Posterior vena cava (tissue), 2 donors: ENCODE measurements at regions of chr3 and their contacts with region 1.

Region 1: DNA sequence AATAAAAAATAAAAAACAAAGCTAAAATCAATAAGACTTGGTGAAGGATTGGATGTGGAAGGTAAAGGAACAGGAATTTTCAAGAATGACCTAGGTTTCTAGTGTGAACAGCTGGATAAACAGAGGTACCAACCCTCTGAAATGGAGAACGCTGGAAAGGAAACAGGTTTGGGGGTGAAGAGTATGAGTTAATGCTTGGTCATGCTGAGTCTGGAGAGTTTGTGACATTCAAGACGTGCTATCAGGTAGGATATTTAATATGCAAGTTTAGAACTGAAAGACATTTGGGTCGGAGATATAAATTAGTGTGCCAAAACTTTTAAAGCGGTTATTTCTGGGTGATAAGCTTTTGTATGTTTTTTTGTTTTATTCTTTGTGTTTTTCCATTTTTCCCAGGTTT is 11.4 kb upstream of the KLHL6 start:
- DNase-seq: no peak

Region 2: GRCh38 chr3:183400352-183400751 is 166.5 kb before region 1 on chr3:
- intact Hi-C with region 1: loop called in 1 of 2 experiments (anchors 5 kb)
- DNase-seq: no peak